ENCODE measurements at regions of chr21 and their contacts with region 1.

Region 1: DNA sequence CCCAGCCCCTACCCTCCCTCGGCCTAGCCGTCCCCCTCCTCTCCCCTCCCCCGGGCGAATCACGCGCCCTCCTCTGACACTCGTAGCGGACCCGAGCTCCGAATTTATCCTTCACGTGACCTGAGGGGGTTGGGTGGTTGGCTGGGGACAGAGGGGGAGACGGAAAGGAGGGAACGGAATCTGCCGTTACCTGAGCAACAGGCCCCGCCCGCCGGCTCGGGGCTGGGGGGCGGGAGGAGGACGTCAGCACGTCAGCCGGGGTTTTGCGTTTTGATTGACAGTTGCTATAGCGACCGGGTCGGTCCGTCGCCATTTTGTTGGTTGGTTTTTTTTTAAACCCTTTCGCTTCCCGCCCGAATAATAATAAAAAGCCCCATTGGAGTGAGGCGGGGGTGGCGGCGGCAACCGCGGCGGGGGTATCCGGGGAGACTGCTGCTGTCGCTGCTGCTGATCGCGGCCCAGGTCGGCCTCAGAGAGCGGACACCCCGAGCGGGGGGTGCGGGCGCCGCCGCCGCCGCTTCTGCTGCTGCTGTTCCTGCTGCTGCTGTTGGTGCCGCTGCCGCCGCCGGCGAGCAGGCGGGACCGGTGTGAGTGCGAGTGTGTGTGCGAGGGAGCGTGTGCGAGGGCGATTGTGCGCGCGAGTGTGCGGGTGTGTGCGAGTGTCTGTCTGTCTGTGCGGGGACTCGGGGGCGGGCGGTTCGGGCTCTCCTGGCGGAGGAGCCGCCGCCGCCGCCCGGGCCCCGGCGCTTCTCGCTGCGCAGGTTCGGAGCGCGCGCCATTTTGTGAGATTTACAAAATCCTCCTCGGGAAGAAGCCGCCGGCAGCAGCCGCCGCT is at the start of gene DYRK1A:
- DNase-seq: peak; percentile 99
- H3K4me3 Mint-ChIP-seq: peak within 1 kb of the TSS; percentile 99
- H3K27ac Mint-ChIP-seq: peak within 1 kb of the TSS; percentile 100
- H3K4me1 Mint-ChIP-seq: peaks cover 34% of the 10 kb centered on the region
- H3K27me3 Mint-ChIP-seq: no peaks in the 10 kb centered on the region
- total RNA-seq, gene DYRK1A: 49.8 to 51.4 TPM

Region 2: GRCh38 chr21:37267269-37268184 is 99.2 kb before region 1 on chr21 and contains the start of gene VPS26C:
- CTCF ChIA-PET with region 1: no interaction called
- intact Hi-C with region 1: loop called (anchors 1 kb)
- DNase-seq: peak; percentile 99
- H3K4me3 Mint-ChIP-seq: peak within 1 kb of the TSS; percentile 94
- H3K27ac Mint-ChIP-seq: peak within 1 kb of the TSS; percentile 96
- H3K4me1 Mint-ChIP-seq: peaks cover 38% of the 10 kb centered on the region
- H3K27me3 Mint-ChIP-seq: no peaks in the 10 kb centered on the region
- total RNA-seq, gene VPS26C: 50.1 to 51.0 TPM

Region 3: GRCh38 chr21:37407719-37408420 is 41.2 kb after region 1 on chr21:
- CTCF ChIA-PET with region 1: no interaction called
- intact Hi-C with region 1: loop called (anchors 1 kb)
- DNase-seq: no peak
- H3K4me3 Mint-ChIP-seq: peak overlapping the region; percentile 19
- H3K27ac Mint-ChIP-seq: peak overlapping the region; percentile 58
- H3K4me1 Mint-ChIP-seq: peaks cover 81% of the 10 kb centered on the region
- H3K27me3 Mint-ChIP-seq: no peaks in the 10 kb centered on the region

Region 4: GRCh38 chr21:37463083-37463801 is 96.5 kb after region 1 on chr21:
- CTCF ChIA-PET with region 1: interaction called, 4 read pairs
- intact Hi-C with region 1: loop called (anchors 1 kb)
- DNase-seq: peak; percentile 35
- H3K4me3 Mint-ChIP-seq: no peak overlapping the region
- H3K27ac Mint-ChIP-seq: peak overlapping the region; percentile 46
- H3K4me1 Mint-ChIP-seq: peaks cover 71% of the 10 kb centered on the region
- H3K27me3 Mint-ChIP-seq: no peaks in the 10 kb centered on the region

Region 5: DNA sequence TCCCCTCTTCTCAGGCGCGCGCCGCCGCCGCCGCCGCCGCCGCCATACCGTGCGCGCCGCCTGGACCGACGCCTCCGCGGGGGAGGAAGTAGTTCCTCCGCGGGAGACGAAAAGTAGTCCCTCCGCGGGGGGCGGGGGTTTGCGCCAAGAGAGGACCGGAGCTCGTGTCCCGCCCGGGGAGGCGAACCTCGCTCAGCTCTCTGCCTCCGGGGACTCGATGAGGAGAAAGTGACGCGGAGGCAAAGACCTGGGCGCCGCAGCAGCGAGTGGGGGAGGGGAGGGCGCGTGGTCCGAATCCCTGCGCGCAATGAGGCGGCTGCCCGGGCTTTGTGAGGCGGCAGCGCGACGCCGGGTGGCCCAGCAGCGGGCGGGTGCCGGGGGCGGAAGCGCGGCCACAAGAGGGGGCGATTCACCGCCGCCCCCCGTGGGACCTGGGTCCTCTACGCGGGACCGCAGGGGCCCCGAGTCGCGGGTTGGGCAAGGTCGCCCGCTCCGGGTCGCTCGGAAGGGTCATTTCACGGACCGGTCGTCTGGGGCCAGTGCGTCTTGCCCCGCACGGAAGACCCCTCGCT is 1947.0 kb after region 1 on chr21 and contains the start of gene BRWD1:
- CTCF ChIA-PET with region 1: no interaction called
- intact Hi-C with region 1: loop called (anchors 10 kb)
- DNase-seq: peak; percentile 75
- H3K4me3 Mint-ChIP-seq: peak within 1 kb of the TSS; percentile 93
- H3K27ac Mint-ChIP-seq: peak within 1 kb of the TSS; percentile 97
- H3K4me1 Mint-ChIP-seq: peaks cover 42% of the 10 kb centered on the region
- H3K27me3 Mint-ChIP-seq: no peaks in the 10 kb centered on the region
- total RNA-seq, gene BRWD1: 23.0 to 24.5 TPM

Measured in activated naive CD4-positive, alpha-beta T cell treated with anti-CD3 and anti-CD28 coated beads for 36 hours (primary cell).